ENCODE measurements at regions of chr12 and their contacts with region 1.

Region 1: DNA sequence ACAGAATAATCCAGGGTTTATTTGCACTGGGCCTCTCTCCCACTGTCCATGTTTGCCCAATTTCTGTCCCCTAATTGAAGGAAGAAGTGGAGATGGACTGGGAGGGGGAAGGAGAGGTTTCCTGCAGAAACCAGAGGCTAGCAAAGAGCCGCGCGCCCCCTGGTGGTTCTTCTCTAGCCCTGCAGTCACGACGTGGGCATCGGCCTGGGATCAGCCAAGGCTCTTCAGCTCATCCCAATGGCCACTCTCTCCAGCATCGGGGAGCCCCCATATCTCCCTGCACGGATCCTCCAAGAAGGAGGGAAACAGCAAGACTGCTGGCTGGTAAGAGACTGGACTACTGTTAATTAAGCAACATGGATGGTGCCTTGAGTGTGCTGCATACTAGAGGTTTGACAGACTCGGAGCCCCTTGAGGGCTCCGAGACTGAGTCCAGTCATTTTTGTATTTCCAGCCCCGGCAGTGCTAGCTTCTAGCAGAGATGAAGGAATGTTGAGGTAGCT is 18.7 kb downstream of the ZBTB39 start:
- DNase-seq: peak; percentile 59
- H3K4me3 Mint-ChIP-seq: no peak overlapping the region
- H3K27ac Mint-ChIP-seq: no peak overlapping the region
- H3K4me1 Mint-ChIP-seq: peaks cover 12% of the 10 kb centered on the region
- H3K27me3 Mint-ChIP-seq: peaks cover 6% of the 10 kb centered on the region

Region 2: DNA sequence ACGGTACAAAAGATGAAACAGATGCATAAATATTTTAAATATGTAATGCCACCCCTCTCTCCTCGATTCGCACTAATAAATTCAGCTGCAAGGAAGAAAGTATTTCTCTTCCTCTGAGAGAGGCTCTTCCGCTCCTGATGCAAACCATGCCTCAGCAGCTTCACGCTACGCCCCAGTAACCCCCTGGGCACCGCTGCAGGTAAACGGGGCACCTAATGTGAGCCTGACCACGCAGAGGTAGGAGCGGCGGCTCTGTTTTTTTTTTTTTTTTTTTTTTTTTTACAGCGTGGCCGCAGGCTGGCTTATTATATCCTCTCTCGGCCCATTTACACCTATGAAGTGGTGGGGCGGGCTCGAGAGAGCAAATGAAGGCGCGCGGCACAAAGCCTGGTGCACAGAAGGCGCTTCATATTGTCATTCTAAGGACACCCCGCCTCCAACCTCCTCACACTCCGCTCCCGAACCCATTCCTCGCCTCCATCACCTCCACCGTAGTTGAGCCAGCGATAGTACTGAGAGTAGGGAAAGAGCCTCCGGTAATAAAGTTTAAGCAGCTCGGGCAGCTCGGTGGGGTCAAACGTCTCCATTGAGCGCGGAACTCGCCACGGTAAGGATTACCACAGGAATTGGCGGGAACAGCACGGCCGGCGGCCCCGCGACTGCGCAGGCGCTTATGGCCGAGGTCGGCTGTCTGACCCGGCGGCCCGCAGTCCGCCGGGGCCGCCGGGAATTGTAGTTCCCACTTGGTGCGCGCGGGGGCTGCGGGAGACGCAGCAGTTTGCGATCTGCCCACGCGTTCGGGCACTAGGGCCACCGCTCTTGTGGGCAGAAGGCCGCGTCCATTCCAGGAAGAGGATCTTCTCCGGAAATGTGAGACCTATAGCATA is 235.6 kb before region 1 on chr12 and contains the start of gene PRIM1:
- intact Hi-C with region 1: loop called (anchors 1 kb)
- DNase-seq: peak; percentile 88
- H3K4me3 Mint-ChIP-seq: peak within 1 kb of the TSS; percentile 98
- H3K27ac Mint-ChIP-seq: peak within 1 kb of the TSS; percentile 99
- H3K4me1 Mint-ChIP-seq: peaks cover 39% of the 10 kb centered on the region
- H3K27me3 Mint-ChIP-seq: no peaks in the 10 kb centered on the region
- total RNA-seq, gene PRIM1: 59.4 and 63.9 TPM in 2 replicates

Region 3: GRCh38 chr12:56839915-56840325 is 147.7 kb before region 1 on chr12:
- intact Hi-C with region 1: loop called (anchors 5 kb)
- DNase-seq: no peak
- H3K4me3 Mint-ChIP-seq: no peak overlapping the region
- H3K27ac Mint-ChIP-seq: no peak overlapping the region
- H3K4me1 Mint-ChIP-seq: peaks cover 19% of the 10 kb centered on the region
- H3K27me3 Mint-ChIP-seq: peaks cover 8% of the 10 kb centered on the region